ENCODE measurements at regions of chr3 and their contacts with region 1.

Region 1: DNA sequence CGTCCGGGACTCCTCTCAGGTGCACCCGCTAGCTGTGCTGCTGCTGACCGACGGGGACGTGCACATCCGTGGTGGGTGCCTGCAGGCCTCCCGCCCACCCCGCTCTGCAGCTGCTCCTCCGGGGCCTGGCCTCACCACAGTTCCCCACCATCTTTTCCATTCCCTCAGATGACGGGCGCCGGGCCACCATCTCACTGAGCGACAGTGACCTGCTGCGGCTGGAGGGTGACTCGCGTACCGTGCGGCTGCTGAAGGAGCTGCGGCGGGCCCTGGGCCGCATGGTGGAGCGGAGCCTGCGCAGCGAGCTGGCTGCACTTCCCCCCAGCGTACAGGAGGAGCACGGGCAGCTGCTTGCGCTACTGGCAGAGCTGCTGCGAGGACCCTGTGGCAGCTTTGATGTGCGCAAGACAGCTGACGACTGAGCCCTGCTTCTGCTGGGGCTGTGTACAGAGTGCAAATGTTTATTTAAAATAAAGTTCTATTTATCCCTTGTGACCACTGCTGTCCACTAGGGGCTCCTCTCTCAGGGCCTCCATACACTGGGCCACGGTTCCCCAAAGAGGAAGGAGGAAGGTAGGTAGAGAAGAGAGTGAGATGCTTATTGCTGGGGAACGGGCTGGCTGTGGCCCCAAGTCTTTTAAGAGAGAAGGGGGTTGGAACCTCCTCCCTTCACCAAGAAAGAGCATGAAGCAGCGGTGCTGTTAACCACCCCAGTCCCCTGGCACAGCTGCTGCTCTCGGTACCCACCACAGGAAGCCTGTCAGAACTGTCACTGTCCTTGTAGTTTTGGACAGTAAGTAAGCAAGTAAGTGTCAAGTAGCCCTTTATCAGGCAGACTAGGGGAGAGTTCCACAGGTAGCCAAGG is 47.0 kb downstream of the DHX30 start:
- DNase-seq: peak in 1 of 2 experiments; percentile 52
- H3K4me3 ChIP-seq: no peak overlapping the region
- H3K27ac ChIP-seq: no peak overlapping the region
- H3K4me1 ChIP-seq: no peaks in the 10 kb centered on the region
- H3K27me3 ChIP-seq: no peaks in the 10 kb centered on the region
- CTCF ChIP-seq: peak in 2 of 3 experiments; percentile 32 to 53; a peak in 3 of 4 replicates
- EP300 ChIP-seq: no peak
- POLR2A ChIP-seq: no peak; a peak in 1 of 3 replicates
- RAD21 ChIP-seq: peak; percentile 39 to 46; a peak in 3 of 4 replicates

Region 2: DNA sequence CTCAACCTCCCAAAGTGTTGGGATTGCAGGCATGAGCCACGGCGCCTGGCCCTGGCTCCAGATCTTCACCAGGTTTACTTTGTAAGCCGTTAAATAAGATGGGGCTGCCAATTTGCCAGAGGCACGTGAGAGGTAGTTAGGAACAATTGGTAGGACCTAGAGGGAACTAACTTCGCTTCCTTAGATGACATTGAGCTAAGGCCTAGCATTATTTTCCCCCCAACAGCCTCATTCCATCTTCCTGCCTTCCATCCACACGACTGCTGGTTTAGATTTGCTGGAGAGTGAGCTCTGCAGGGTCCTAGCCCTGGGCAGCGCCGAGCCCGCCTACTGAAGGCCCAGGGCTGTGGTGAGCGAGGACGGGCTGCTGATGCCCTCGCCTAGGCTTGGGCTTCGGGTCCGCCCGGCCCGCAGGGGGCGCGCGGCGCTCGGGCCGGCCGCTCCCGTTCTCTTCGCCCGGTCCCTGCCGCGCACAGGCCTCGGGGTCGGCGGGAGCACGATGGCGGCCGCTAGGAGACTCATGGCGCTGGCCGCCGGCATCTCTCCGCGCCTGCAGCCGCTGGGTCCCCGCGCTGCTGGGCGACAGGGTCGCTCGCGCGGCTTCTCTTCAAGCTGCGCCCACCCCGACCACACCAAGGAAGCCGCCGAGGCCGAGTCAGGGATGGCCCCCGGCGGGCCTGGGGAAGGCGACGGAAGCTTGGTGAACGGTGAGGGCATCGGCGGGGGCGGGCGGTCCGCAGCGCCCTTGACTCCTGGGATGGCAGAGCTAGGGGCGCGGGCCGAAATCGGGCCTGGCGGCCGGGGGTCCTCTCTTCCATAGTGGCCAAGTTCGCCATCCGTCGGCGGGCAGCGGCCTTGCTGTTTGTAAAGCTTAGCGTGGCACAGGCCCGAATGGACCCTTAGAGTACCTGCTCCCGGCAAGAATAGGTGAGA is 25.1 kb before region 1 on chr3:
- CTCF ChIA-PET with region 1: interaction called, 7 read pairs
- POLR2A ChIA-PET with region 1: interaction called, 34 read pairs
- DNase-seq: peak in 1 of 2 experiments; percentile 86
- H3K4me3 ChIP-seq: peak overlapping the region; percentile 80 to 99 (median 86)
- H3K27ac ChIP-seq: peak overlapping the region; percentile 79
- H3K4me1 ChIP-seq: peaks cover 3 to 6% (median 4%) of the 10 kb centered on the region in 4 experiments; a peak in 5 of 7 replicates
- H3K27me3 ChIP-seq: no peaks in the 10 kb centered on the region
- CTCF ChIP-seq: peak; percentile 76 to 91 (median 90)
- EP300 ChIP-seq: no peak; a peak in 1 of 3 replicates
- POLR2A ChIP-seq: peak; percentile 84 to 93
- RAD21 ChIP-seq: peak; percentile 23 to 53; a peak in 3 of 4 replicates

Region 3: GRCh38 chr3:47865192-47865591 is 15.3 kb after region 1 on chr3:
- CTCF ChIA-PET with region 1: interaction called, 17 read pairs
- POLR2A ChIA-PET with region 1: interaction called, 6 read pairs
- DNase-seq: no peak
- H3K4me3 ChIP-seq: no peak overlapping the region
- H3K27ac ChIP-seq: no peak overlapping the region
- H3K4me1 ChIP-seq: no peaks in the 10 kb centered on the region
- H3K27me3 ChIP-seq: no peaks in the 10 kb centered on the region
- CTCF ChIP-seq: peak in 1 of 3 experiments; percentile 28; a peak in 2 of 4 replicates
- EP300 ChIP-seq: no peak
- POLR2A ChIP-seq: no peak
- RAD21 ChIP-seq: peak; percentile 30 to 43; a peak in 3 of 4 replicates

Region 4: GRCh38 chr3:47890828-47891612 is 41.1 kb after region 1 on chr3:
- CTCF ChIA-PET with region 1: interaction called, 11 read pairs
- POLR2A ChIA-PET with region 1: interaction called, 3 read pairs
- DNase-seq: no peak
- H3K4me3 ChIP-seq: no peak overlapping the region
- H3K27ac ChIP-seq: no peak overlapping the region
- H3K4me1 ChIP-seq: peaks cover 0 to 23% (median 17%) of the 10 kb centered on the region in 4 experiments; a peak in 6 of 7 replicates
- H3K27me3 ChIP-seq: no peaks in the 10 kb centered on the region
- CTCF ChIP-seq: no peak
- EP300 ChIP-seq: no peak
- POLR2A ChIP-seq: no peak
- RAD21 ChIP-seq: no peak; a peak in 1 of 4 replicates

Region 5: GRCh38 chr3:47989981-47990440 is 140.1 kb after region 1 on chr3:
- CTCF ChIA-PET with region 1: interaction called, 25 read pairs
- POLR2A ChIA-PET with region 1: interaction called, 4 read pairs
- DNase-seq: peak; percentile 54 to 62
- H3K4me3 ChIP-seq: no peak overlapping the region
- H3K27ac ChIP-seq: no peak overlapping the region
- H3K4me1 ChIP-seq: no peaks in the 10 kb centered on the region; a peak in 1 of 7 replicates
- H3K27me3 ChIP-seq: no peaks in the 10 kb centered on the region
- CTCF ChIP-seq: peak; percentile 72 to 97 (median 90)
- EP300 ChIP-seq: no peak
- POLR2A ChIP-seq: no peak
- RAD21 ChIP-seq: peak; percentile 93 to 95

Region 6: DNA sequence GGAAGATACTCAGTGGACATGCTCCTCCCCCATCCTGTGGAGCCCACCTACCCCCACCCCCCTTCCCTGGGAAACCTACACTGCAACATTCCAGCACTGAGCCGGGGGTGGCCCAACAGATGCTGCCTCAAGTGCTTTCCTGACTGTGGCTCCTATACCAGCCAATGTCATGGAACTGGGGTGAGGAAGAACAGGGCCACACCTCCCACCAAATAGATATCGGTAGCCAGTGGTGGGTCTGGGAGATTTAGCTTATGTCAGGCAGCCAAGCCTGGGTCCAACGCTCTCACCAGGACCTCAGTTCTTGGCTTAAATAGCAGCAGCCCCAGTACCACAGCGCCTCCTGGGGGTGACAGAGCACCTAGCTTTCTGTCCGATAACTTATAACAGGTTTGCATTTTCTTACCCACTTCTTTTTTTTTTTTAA is 308.0 kb after region 1 on chr3:
- CTCF ChIA-PET with region 1: interaction called, 31 read pairs
- POLR2A ChIA-PET with region 1: interaction called, 4 read pairs
- DNase-seq: peak; percentile 43 to 87
- H3K4me3 ChIP-seq: no peak overlapping the region
- H3K27ac ChIP-seq: no peak overlapping the region
- H3K4me1 ChIP-seq: no peaks in the 10 kb centered on the region; a peak in 1 of 7 replicates
- H3K27me3 ChIP-seq: no peaks in the 10 kb centered on the region
- CTCF ChIP-seq: peak; percentile 79 to 80 (median 80)
- EP300 ChIP-seq: no peak
- POLR2A ChIP-seq: no peak
- RAD21 ChIP-seq: peak; percentile 71 to 77